Aorta (tissue), 5 donors: ENCODE measurements at regions of chr2 and their contacts with region 1.

Region 1: DNA sequence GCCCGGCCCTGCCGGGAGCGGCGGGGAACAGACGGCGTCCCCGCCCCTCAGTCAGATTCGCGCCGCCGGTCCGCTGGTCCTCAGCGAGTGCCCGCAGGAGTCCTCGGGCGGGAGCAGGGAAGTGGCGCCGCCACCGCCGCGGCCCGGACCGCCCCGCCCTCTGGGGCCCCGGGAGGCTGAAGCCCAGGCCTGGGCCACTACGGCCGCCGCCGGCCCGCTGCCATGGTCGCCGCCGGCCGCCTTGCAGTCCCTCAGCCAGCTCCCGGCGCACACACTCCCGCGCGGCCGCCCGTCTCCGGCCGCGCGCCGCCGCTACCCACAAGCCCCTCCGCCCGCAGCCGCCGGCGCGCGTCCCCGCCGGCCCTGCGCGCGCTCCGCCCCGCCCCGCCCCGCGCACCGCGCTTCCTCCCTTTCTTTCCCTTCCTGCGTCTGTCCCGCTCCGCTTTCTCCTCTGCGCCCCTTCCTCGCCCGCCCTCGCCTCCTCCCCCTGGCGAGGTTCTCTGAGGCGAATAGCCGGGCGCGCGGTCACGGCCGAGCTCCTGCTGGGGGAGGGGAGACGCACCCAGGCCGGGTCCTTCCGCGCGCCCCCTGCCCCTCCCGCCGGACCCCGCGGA is at the start of gene ROCK2:
- DNase-seq: peak; percentile 91 to 95
- ATAC-seq: peak; percentile 86
- H3K4me3 ChIP-seq: peak within 1 kb of the TSS; percentile 94 to 96
- H3K27ac ChIP-seq: peak within 1 kb of the TSS; percentile 77 to 94
- H3K4me1 ChIP-seq: no peaks in the 10 kb centered on the region
- H3K27me3 ChIP-seq: no peaks in the 10 kb centered on the region
- total RNA-seq, gene ROCK2: 97.9 to 119 TPM

Region 2: GRCh38 chr2:11154923-11155380 is 189.5 kb before region 1 on chr2:
- intact Hi-C with region 1: loop called in 1 of 2 experiments (anchors 10 kb)
- DNase-seq: peak; percentile 99
- ATAC-seq: peak; percentile 96
- H3K4me3 ChIP-seq: peak overlapping the region; percentile 9 to 76
- H3K27ac ChIP-seq: peak overlapping the region; percentile 71 to 94
- H3K4me1 ChIP-seq: no peaks in the 10 kb centered on the region
- H3K27me3 ChIP-seq: no peaks in the 10 kb centered on the region

Region 3: GRCh38 chr2:11234309-11234708 is 110.1 kb before region 1 on chr2:
- intact Hi-C with region 1: loop called (anchors 5 to 10 kb)
- DNase-seq: no peak
- ATAC-seq: peak; percentile 59
- H3K4me3 ChIP-seq: no peak overlapping the region
- H3K27ac ChIP-seq: no peak overlapping the region
- H3K4me1 ChIP-seq: no peaks in the 10 kb centered on the region
- H3K27me3 ChIP-seq: no peaks in the 10 kb centered on the region

Region 4: GRCh38 chr2:11239666-11240462 is 104.6 kb before region 1 on chr2:
- intact Hi-C with region 1: loop called (anchors 5 to 10 kb)
- DNase-seq: no peak
- ATAC-seq: no peak
- H3K4me3 ChIP-seq: no peak overlapping the region
- H3K27ac ChIP-seq: no peak overlapping the region
- H3K4me1 ChIP-seq: no peaks in the 10 kb centered on the region
- H3K27me3 ChIP-seq: no peaks in the 10 kb centered on the region

Region 5: GRCh38 chr2:11389551-11390528 is 45.4 kb after region 1 on chr2:
- intact Hi-C with region 1: loop called (anchors 5 kb)
- DNase-seq: no peak
- ATAC-seq: no peak
- H3K4me3 ChIP-seq: no peak overlapping the region
- H3K27ac ChIP-seq: peak overlapping the region in 1 of 2 donors; percentile 30
- H3K4me1 ChIP-seq: peaks cover 0 to 3% of the 10 kb centered on the region in 2 donors
- H3K27me3 ChIP-seq: no peaks in the 10 kb centered on the region

Region 6: DNA sequence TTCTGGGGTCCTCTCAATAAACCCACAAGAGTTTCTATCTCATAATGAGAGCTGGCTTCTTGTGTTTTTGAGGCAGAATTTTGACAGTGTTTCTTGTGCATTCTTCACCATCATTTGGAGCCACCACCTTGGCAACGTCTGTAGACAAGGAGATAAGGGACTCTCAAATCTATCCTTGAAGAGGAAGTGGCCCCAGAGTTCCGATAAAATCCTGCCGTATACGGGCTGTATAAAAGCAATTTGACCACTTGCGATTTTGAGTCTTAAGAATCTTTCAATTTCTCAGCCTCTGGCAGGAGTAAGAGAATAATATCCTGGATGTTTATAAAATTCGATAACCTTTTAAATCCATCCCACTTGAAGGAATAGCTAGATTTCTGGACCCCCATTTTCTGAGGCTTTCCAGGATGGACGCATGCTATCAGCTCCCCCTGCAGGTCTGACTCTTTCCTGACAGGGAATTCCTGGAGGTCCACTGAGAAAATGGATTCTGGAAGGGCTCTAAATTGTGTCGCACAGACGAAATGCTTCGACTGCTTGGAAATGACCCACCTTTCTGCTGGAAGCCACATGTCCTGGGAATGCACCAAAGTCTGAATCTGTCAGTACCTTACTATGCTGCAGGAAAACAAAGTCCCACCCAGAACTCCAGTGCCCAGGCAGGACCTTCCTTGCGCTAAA is 67.5 kb after region 1 on chr2:
- intact Hi-C with region 1: loop called (anchors 1 to 2 kb)
- DNase-seq: peak in 1 of 2 donors; percentile 58
- ATAC-seq: peak; percentile 82
- H3K4me3 ChIP-seq: peak overlapping the region; percentile 62 to 78
- H3K27ac ChIP-seq: no peak overlapping the region
- H3K4me1 ChIP-seq: peaks cover 2 to 5% of the 10 kb centered on the region in 2 donors
- H3K27me3 ChIP-seq: no peaks in the 10 kb centered on the region

Region 7: GRCh38 chr2:11539317-11540152 is 195.1 kb after region 1 on chr2:
- intact Hi-C with region 1: no loop called
- DNase-seq: no peak
- ATAC-seq: no peak
- H3K4me3 ChIP-seq: no peak overlapping the region
- H3K27ac ChIP-seq: no peak overlapping the region
- H3K4me1 ChIP-seq: no peaks in the 10 kb centered on the region
- H3K27me3 ChIP-seq: peaks cover 0 to 3% of the 10 kb centered on the region in 2 donors